ENCODE measurements at regions of chr4 and their contacts with region 1.

Region 1: GRCh38 chr4:122732329-122733026 is at the start of gene BBS12:
- DNase-seq: peak; percentile 95 to 100
- H3K4me3 ChIP-seq: peak within 1 kb of the TSS; percentile 84
- H3K27ac ChIP-seq: peak within 1 kb of the TSS; percentile 86 to 89
- H3K4me1 ChIP-seq: peaks cover 0 to 10% of the 10 kb centered on the region in 2 donors
- H3K27me3 ChIP-seq: no peaks in the 10 kb centered on the region
- CTCF ChIP-seq: peak in 2 of 3 experiments; percentile 46 to 48
- total RNA-seq, gene BBS12: not detected

Region 2: GRCh38 chr4:122666527-122667245 is 65.8 kb before region 1 on chr4:
- intact Hi-C with region 1: loop called (anchors 2 kb)
- DNase-seq: no peak
- H3K4me3 ChIP-seq: no peak overlapping the region
- H3K27ac ChIP-seq: peak overlapping the region; percentile 50 to 53
- H3K4me1 ChIP-seq: peaks cover 0 to 13% of the 10 kb centered on the region in 2 donors
- H3K27me3 ChIP-seq: no peaks in the 10 kb centered on the region
- CTCF ChIP-seq: no peak

Region 3: DNA sequence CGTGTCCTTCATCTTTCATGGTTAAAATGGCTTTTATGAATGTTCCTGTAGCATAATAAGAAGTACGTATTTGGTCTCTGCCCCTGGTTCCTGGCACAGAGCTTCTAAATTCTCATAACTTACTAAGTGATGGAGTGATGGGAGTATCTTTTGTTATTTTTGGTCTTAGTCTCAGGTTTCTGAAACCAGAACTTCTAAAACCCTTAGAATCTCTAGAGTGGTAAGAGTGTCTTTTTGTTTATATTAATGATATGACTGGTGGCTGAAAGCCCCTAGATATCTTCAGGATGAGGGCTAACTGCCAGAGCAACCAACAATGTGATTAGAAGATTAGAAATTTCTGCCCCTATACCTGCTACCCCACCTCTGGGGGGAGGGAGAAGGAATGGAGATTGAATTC is 45.8 kb before region 1 on chr4:
- intact Hi-C with region 1: no loop called
- DNase-seq: no peak
- H3K4me3 ChIP-seq: no peak overlapping the region
- H3K27ac ChIP-seq: no peak overlapping the region
- H3K4me1 ChIP-seq: no peaks in the 10 kb centered on the region
- H3K27me3 ChIP-seq: no peaks in the 10 kb centered on the region
- CTCF ChIP-seq: no peak

Region 4: DNA sequence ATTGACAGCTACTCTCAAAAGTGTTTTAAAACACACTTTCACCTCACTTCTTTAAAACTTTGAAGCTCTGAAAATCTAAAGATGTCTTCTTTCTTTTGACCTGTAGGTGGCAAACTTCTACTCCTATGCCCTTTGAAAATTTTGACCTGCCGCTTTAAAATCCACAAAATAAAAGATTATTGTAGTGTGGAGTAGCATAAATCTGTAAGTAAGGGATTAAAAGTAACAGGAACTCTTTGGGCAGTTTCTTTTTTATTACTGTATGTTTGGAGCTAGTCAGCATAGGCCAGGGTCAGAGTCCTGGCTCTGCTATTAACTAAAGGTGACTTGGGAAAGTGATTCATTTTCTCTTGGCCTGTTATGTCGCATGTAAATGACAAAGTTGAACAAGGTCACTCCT is 25.6 kb after region 1 on chr4:
- intact Hi-C with region 1: loop called (anchors 2 kb)
- DNase-seq: no peak
- H3K4me3 ChIP-seq: no peak overlapping the region
- H3K27ac ChIP-seq: no peak overlapping the region
- H3K4me1 ChIP-seq: no peaks in the 10 kb centered on the region
- H3K27me3 ChIP-seq: no peaks in the 10 kb centered on the region
- CTCF ChIP-seq: peak; percentile 51 to 82 (median 64)

Region 5: DNA sequence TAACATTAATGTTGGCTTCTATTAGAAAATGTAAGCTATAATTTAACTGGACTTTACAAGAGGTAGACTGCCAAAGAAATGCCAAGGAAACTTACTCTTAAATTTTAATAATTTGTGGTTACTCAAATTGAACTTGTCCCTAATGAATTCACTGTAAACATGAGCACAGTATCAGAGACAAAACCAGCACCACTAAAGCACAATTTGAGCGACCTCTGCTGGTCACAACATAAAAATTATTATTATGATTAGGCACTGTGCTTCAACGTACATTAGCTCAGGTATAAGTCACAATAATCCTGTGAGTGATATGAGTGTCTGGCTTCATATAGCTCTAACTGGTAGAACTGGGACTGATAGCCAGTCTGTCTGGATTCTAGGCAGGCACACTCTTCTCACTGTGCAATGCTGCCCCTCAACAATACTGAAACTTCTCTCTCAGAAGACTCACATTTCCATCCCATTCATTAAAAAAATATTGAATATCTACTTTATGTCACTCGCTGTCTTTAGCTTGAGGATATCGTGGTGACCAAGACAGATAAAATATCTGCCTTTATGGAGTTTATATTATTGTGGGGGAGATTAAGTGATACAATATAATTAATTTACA is 181.9 kb after region 1 on chr4:
- intact Hi-C with region 1: loop called (anchors 2 kb)
- DNase-seq: no peak
- H3K4me3 ChIP-seq: no peak overlapping the region
- H3K27ac ChIP-seq: no peak overlapping the region
- H3K4me1 ChIP-seq: no peaks in the 10 kb centered on the region
- H3K27me3 ChIP-seq: no peaks in the 10 kb centered on the region
- CTCF ChIP-seq: peak in 2 of 3 experiments; percentile 14 to 57

Region 6: DNA sequence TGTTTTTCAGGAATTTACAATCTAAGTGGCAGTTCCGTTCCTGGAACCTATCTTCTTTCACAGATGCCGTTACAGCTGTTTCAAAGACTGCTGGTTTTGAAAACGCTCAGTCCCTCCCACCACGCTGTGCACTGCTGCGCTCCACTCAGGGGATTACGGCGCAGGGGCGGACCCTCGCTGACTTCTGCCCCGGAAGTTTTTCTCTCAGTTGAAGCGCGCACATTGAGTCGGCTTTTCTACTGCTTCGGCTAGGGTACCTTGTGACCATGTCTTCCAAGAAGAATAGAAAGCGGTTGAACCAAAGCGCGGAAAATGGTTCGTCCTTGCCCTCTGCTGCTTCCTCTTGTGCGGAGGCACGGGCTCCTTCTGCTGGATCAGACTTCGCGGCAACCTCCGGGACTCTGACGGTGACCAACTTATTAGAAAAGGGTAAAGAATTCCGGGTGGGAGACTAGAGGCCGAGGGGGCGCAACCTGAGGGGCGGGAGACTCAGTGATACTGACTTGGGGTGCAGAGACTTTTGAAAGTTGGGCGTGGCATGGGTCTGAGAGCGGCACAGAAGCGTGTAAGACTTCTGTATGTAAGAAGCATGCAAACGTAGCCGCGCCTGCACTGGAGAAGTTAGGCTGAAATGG is 190.5 kb after region 1 on chr4:
- intact Hi-C with region 1: loop called (anchors 2 kb)
- DNase-seq: peak in 1 of 2 donors; percentile 92
- H3K4me3 ChIP-seq: peak overlapping the region; percentile 76 to 85
- H3K27ac ChIP-seq: peak overlapping the region; percentile 71 to 77
- H3K4me1 ChIP-seq: peaks cover 4 to 12% of the 10 kb centered on the region in 2 donors
- H3K27me3 ChIP-seq: no peaks in the 10 kb centered on the region
- CTCF ChIP-seq: peak in 1 of 3 experiments; percentile 5

Region 7: GRCh38 chr4:124712372-124713184 is 1980.1 kb after region 1 on chr4 and contains the start of gene ANKRD50:
- intact Hi-C with region 1: loop called (anchors 10 kb)
- DNase-seq: peak; percentile 66 to 94
- H3K4me3 ChIP-seq: peak within 1 kb of the TSS; percentile 72 to 98
- H3K27ac ChIP-seq: peak within 1 kb of the TSS; percentile 90 to 97
- H3K4me1 ChIP-seq: peaks cover 0 to 18% of the 10 kb centered on the region in 2 donors
- H3K27me3 ChIP-seq: no peaks in the 10 kb centered on the region
- CTCF ChIP-seq: no peak
- total RNA-seq, gene ANKRD50: 26.9 TPM

Measured in ascending aorta (tissue), 2 donors.